Activated CD4-positive, alpha-beta T cell treated with anti-CD3 and anti-CD28 coated beads for 36 hours (primary cell): ENCODE measurements at regions of chr3 and their contacts with region 1.

Region 1: DNA sequence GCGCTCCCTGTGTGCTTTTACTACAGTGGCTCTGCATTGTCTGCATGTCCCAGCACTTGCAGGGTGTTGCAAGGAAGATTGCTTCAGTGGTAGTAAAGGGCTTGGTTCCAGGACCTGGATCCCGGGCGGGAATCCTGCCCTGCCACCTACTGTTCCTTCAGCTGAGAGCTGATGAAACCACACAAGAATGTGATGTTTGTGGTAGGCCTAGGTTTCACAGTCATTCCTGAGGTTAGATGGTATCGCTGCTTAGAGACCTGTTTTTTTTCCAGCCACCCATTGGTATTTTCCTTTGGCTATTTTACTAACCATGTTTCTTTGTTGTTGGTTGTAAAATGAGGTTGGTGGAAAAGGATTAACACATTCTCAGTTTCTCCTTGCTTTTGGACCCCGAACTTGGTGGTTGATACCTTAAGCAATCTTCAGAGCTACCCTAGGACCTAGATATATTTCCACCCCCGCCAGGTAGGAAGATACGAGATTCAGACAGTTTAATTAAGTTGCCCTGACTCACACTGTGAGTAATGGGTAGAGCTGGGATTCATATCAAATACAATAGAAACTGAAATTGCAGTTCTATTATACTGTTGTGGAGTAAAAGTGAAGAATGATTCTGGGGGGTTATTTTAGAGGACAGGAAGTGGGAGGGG is 11.4 kb downstream of the GPR87 start:
- DNase-seq: peak; percentile 51
- ATAC-seq: peak; percentile 80
- H3K4me3 Mint-ChIP-seq: peak overlapping the region; percentile 40
- H3K27ac Mint-ChIP-seq: peak overlapping the region; percentile 69
- H3K4me1 Mint-ChIP-seq: peaks cover 78% of the 10 kb centered on the region
- H3K27me3 Mint-ChIP-seq: peaks cover 14% of the 10 kb centered on the region

Region 2: GRCh38 chr3:150975086-150975991 is 329.9 kb before region 1 on chr3:
- CTCF ChIA-PET with region 1: no interaction called
- POLR2A ChIA-PET with region 1: no interaction called
- intact Hi-C with region 1: loop called in 1 of 2 experiments (anchors 5 kb)
- DNase-seq: peak; percentile 20
- ATAC-seq: peak; percentile 84
- H3K4me3 Mint-ChIP-seq: no peak overlapping the region
- H3K27ac Mint-ChIP-seq: peak overlapping the region; percentile 63
- H3K4me1 Mint-ChIP-seq: peaks cover 13% of the 10 kb centered on the region
- H3K27me3 Mint-ChIP-seq: peaks cover 19% of the 10 kb centered on the region

Region 3: GRCh38 chr3:151282921-151283320 is 22.3 kb before region 1 on chr3:
- CTCF ChIA-PET with region 1: interaction called, 6 read pairs
- POLR2A ChIA-PET with region 1: no interaction called
- intact Hi-C with region 1: loop called in 1 of 2 experiments (anchors 1 kb)
- DNase-seq: no peak
- ATAC-seq: peak; percentile 57
- H3K4me3 Mint-ChIP-seq: no peak overlapping the region
- H3K27ac Mint-ChIP-seq: no peak overlapping the region
- H3K4me1 Mint-ChIP-seq: peaks cover 29% of the 10 kb centered on the region
- H3K27me3 Mint-ChIP-seq: no peaks in the 10 kb centered on the region

Region 4: DNA sequence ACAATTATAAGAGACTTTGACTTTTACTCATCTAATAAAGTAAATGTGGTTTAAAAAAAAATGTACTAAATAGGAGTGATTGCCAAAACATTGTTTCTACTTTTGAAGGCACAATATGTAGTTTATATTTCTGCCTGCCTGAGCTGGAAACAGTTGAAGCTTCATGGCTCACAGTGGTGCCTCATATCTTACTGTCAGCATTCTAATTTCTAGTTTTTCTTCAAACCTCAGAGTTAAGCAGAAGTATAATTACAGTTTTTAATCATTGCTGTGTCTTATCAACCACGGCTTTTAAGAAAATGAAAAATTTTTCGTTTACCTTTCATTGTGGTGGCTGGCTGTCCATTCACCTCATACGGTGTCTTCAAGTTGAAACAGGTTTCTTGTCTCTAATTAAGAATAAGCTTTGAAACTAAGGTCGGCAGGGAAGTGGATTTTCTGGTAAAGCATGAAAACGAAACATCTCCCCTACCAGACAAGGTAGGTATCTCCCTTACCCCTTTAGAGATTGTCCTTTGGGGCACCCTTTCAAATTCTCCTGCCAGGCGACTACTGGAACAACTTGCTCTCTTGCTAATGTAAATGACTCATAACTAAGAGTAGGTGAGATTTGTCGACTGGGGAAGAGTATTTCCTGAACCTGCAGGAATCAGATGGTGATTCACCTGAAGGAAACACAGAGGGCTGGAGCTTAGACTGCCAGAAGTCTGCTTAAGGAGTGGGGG is 11.2 kb after region 1 on chr3 and contains the start of gene GPR87:
- CTCF ChIA-PET with region 1: interaction called, 8 read pairs
- POLR2A ChIA-PET with region 1: interaction called, 16 read pairs
- intact Hi-C with region 1: loop called (anchors 1 kb)
- DNase-seq: peak; percentile 50
- ATAC-seq: peak; percentile 83
- H3K4me3 Mint-ChIP-seq: peak within 1 kb of the TSS; percentile 50
- H3K27ac Mint-ChIP-seq: peak within 1 kb of the TSS; percentile 90
- H3K4me1 Mint-ChIP-seq: peaks cover 47% of the 10 kb centered on the region
- H3K27me3 Mint-ChIP-seq: peaks cover 2% of the 10 kb centered on the region
- total RNA-seq, gene GPR87: 2.3 to 2.5 TPM

Region 5: DNA sequence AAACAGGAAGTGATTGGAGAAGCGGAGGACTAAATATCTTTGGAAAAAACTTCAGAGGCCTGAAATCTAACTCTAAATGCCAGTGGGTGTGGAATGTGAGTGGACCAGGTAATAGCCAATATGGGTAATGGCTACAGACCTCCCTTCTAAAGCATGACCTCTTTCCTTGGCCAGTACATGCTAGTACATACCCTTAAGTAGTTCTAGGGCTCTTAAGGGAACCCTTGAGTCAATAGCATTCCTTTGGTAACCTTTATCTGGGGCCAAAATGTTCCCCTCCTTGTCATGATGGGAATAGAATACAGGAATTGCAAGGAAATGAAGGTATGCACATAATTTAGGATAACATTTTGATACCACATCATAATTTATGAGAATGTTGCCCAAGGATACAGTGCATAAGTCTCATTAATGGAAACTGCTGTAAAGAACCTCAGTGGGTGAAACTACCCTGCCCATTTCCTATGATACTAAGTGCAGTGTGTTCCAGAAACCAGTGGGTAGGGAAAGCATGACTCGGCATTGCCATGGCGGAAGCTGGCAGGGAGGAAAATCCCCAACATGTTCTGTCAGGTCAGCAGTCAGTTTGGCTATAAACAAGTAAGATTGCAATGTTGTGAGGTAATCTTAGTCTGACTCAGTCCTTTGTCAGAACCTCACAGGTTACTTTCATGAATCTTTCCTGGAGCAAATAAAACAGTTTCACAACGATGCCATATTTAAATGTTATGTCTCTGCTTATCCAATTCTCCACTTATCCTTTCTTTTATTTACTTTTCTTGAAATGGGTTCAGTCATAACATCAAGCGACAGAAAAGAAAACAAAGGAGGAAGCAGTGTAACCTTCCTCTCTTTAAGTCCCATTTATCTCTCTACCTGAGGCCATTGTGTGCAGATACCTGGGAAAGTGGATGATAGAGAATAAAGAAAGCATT is 1833.3 kb after region 1 on chr3:
- CTCF ChIA-PET with region 1: no interaction called
- POLR2A ChIA-PET with region 1: no interaction called
- intact Hi-C with region 1: loop called in 1 of 2 experiments (anchors 10 kb)
- DNase-seq: peak; percentile 86
- ATAC-seq: peak; percentile 89
- H3K4me3 Mint-ChIP-seq: no peak overlapping the region
- H3K27ac Mint-ChIP-seq: peak overlapping the region; percentile 76
- H3K4me1 Mint-ChIP-seq: peaks cover 26% of the 10 kb centered on the region
- H3K27me3 Mint-ChIP-seq: peaks cover 3% of the 10 kb centered on the region